Activated CD8-positive, alpha-beta T cell treated with anti-CD3 and anti-CD28 coated beads, Interleukin-2, amount 10 ng/mL, durations not matched to agents 7 days and 5 days (primary cell): ENCODE measurements at regions of chr11 and their contacts with region 1.

Region 1: GRCh38 chr11:118227865-118228785 is 3.3 kb upstream of the JAML start:
- DNase-seq: peak; percentile 66
- ATAC-seq: peak; percentile 32
- H3K4me3 Mint-ChIP-seq: peak overlapping the region; percentile 65
- H3K27ac Mint-ChIP-seq: no peak overlapping the region
- H3K4me1 Mint-ChIP-seq: peaks cover 7% of the 10 kb centered on the region
- H3K27me3 Mint-ChIP-seq: no peaks in the 10 kb centered on the region

Region 2: GRCh38 chr11:118216621-118217481 is 11.3 kb before region 1 on chr11:
- CTCF ChIA-PET with region 1: interaction called, 88 read pairs
- POLR2A ChIA-PET with region 1: interaction called, 106 read pairs
- DNase-seq: peak; percentile 56
- ATAC-seq: peak; percentile 52
- H3K4me3 Mint-ChIP-seq: peak overlapping the region; percentile 76
- H3K27ac Mint-ChIP-seq: peak overlapping the region; percentile 94
- H3K4me1 Mint-ChIP-seq: peaks cover 98% of the 10 kb centered on the region
- H3K27me3 Mint-ChIP-seq: no peaks in the 10 kb centered on the region

Region 3: GRCh38 chr11:118240999-118241768 is 13.1 kb after region 1 on chr11:
- CTCF ChIA-PET with region 1: interaction called, 54 read pairs
- POLR2A ChIA-PET with region 1: interaction called, 86 read pairs
- DNase-seq: peak; percentile 81
- ATAC-seq: peak; percentile 89
- H3K4me3 Mint-ChIP-seq: peak overlapping the region; percentile 71
- H3K27ac Mint-ChIP-seq: peak overlapping the region; percentile 88
- H3K4me1 Mint-ChIP-seq: peaks cover 92% of the 10 kb centered on the region
- H3K27me3 Mint-ChIP-seq: no peaks in the 10 kb centered on the region

Region 4: GRCh38 chr11:118247047-118247446 is 18.9 kb after region 1 on chr11:
- CTCF ChIA-PET with region 1: interaction called, 54 read pairs
- POLR2A ChIA-PET with region 1: interaction called, 86 read pairs
- DNase-seq: peak; percentile 25
- ATAC-seq: peak; percentile 21
- H3K4me3 Mint-ChIP-seq: no peak overlapping the region
- H3K27ac Mint-ChIP-seq: peak overlapping the region; percentile 78
- H3K4me1 Mint-ChIP-seq: peaks cover 74% of the 10 kb centered on the region
- H3K27me3 Mint-ChIP-seq: no peaks in the 10 kb centered on the region

Region 5: GRCh38 chr11:118251858-118252652 is 23.9 kb after region 1 on chr11 and contains the start of gene MPZL3:
- CTCF ChIA-PET with region 1: interaction called, 34 read pairs
- POLR2A ChIA-PET with region 1: interaction called, 19 read pairs
- DNase-seq: peak; percentile 90
- ATAC-seq: peak; percentile 79
- H3K4me3 Mint-ChIP-seq: peak within 1 kb of the TSS; percentile 94
- H3K27ac Mint-ChIP-seq: peak within 1 kb of the TSS; percentile 99
- H3K4me1 Mint-ChIP-seq: peaks cover 42% of the 10 kb centered on the region
- H3K27me3 Mint-ChIP-seq: no peaks in the 10 kb centered on the region
- total RNA-seq, gene MPZL3: 19.6 to 20.0 TPM

Region 6: GRCh38 chr11:118258410-118258809 is 30.3 kb after region 1 on chr11:
- CTCF ChIA-PET with region 1: interaction called, 6 read pairs
- POLR2A ChIA-PET with region 1: interaction called, 19 read pairs
- DNase-seq: peak; percentile 42
- ATAC-seq: no peak
- H3K4me3 Mint-ChIP-seq: no peak overlapping the region
- H3K27ac Mint-ChIP-seq: no peak overlapping the region
- H3K4me1 Mint-ChIP-seq: peaks cover 56% of the 10 kb centered on the region
- H3K27me3 Mint-ChIP-seq: no peaks in the 10 kb centered on the region

Region 7: GRCh38 chr11:118338637-118339061 is 110.5 kb after region 1 on chr11:
- CTCF ChIA-PET with region 1: interaction called, 4 read pairs
- POLR2A ChIA-PET with region 1: interaction called, 30 read pairs
- DNase-seq: peak; percentile 97
- ATAC-seq: peak; percentile 67
- H3K4me3 Mint-ChIP-seq: peak overlapping the region; percentile 84
- H3K27ac Mint-ChIP-seq: peak overlapping the region; percentile 96
- H3K4me1 Mint-ChIP-seq: peaks cover 64% of the 10 kb centered on the region
- H3K27me3 Mint-ChIP-seq: no peaks in the 10 kb centered on the region